ENCODE measurements at regions of chr17 and their contacts with region 1.

Region 1: DNA sequence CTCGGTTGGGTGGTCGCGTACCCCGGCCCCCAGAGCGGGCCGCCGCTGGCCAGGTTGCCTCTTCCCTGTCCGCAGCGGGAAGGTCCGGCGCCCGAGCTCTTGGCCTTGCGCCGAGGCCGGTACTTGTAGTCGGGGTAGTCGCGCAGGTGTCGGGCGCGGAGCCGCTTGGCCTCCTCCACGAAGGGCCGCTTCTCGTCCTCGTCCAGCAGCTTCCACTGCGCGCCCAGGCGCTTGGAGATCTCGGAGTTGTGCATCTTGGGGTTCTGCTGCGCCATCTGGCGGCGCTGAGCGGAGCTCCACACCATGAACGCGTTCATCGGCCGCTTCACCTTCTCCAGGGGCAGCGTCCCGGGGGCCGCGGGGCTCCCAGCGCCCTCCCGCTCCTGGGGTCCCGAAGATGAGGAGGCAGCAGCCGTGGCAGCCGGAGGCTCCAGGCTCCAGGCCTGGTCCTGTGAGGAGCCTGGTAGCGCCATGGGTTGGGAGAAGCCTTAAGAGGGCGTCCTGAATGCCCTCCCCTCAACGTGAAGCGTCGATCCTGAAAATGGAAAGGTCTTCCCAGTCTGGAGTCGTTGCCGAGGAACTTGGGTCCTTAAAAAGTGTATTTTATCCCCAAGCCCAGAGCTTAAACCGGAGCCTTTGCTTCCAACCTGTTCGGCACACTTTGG is 558 bp downstream of the SOX15 start:
- DNase-seq: peak; percentile 53 to 84 (median 65)
- ATAC-seq: peak; percentile 91 to 92
- H3K4me3 Mint-ChIP-seq: no peak overlapping the region
- H3K27ac Mint-ChIP-seq: peak overlapping the region in 5 of 10 donors; percentile 17 to 69 (median 56)
- H3K4me1 Mint-ChIP-seq: peaks cover 6 to 19% (median 17%) of the 10 kb centered on the region in 4 donors
- H3K27me3 Mint-ChIP-seq: no peaks in the 10 kb centered on the region

Region 2: DNA sequence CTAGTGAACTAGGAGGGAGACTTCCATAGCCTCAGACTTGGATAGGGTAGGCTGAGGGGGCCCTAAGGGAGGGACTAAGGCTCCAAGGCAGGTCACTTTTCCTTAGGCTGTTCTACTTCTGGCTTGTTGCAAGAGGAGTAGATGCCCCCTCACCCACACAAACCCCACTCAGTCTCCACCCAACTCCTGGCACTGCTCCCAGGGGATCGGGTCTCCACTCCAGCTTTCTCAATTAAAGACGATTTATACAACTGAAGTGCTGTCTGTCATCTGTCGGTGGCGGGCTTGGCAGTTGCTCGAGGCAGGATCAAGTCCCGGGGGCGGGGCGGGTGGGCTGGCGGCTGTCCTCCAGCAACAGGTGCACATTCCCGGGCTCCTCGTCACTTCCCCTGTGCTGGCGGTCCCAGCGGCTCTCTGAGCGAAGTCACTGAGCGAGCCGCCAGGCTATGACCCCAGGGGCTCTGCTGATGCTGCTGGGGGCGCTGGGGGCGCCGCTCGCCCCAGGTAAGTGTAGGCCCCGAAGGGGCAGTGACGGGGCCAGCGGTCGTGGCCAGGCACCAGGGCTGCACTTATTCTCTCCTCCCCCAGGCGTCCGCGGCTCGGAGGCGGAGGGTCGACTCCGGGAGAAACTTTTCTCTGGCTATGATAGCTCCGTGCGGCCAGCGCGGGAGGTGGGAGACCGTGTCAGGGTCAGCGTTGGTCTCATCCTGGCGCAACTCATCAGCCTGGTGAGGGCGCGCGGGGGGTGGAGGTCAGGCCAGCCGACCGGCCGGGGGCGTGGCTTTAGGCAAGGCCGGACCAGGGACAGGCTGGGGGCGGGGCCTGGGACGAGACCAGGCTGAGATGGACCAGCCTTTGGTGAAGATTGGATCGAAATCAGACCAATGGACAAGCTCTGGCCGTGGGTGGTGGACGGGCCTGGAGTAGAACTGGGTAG is 144.4 kb before region 1 on chr17 and contains the start of gene CHRNB1:
- POLR2A ChIA-PET with region 1: no interaction called
- DNase-seq: peak in 2 of 10 donors; percentile 23 to 24
- ATAC-seq: peak; percentile 32 to 38
- H3K4me3 Mint-ChIP-seq: peak within 1 kb of the TSS; percentile 75 to 94 (median 86)
- H3K27ac Mint-ChIP-seq: peak within 1 kb of the TSS in 8 of 10 donors; percentile 7 to 91 (median 62)
- H3K4me1 Mint-ChIP-seq: peaks cover 19 to 33% (median 28%) of the 10 kb centered on the region in 4 donors
- H3K27me3 Mint-ChIP-seq: peaks cover 17 to 71% (median 40%) of the 10 kb centered on the region in 5 donors
- polyA plus RNA-seq, gene CHRNB1: 18.1 to 24.5 (median 24.3) TPM

Region 3: DNA sequence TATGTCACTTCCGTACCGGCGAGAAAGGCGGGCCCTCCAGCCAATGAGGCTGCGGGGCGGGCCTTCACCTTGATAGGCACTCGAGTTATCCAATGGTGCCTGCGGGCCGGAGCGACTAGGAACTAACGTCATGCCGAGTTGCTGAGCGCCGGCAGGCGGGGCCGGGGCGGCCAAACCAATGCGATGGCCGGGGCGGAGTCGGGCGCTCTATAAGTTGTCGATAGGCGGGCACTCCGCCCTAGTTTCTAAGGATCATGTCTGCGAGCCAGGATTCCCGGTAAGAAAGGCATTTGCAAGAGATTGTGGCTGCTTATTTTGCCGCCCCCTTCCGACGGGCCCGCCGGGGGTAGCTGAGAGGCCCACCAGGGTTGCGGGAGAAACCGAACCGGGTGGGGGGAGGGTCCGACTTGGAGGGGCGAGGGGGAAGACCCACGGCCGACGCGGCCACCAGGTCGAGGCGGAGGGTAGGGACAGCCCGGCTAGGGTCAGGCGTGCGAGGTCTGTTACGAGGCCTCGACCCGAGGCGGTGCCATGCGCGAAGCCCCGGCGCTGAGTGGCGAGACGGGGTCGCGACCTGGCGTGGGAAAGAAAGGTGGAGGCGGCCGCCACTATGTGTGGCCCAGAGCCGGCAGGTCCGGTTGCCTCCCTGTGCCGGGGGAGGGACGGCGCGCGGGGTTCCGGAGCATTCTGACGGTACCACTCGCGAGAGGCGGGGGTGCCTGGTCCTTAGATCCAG is 16.6 kb before region 1 on chr17:
- POLR2A ChIA-PET with region 1: interaction called, 129 read pairs
- DNase-seq: peak; percentile 97 to 100 (median 100)
- ATAC-seq: peak; percentile 12 to 85
- H3K4me3 Mint-ChIP-seq: peak overlapping the region; percentile 91 to 100 (median 98)
- H3K27ac Mint-ChIP-seq: peak overlapping the region; percentile 95 to 100 (median 99)
- H3K4me1 Mint-ChIP-seq: peaks cover 19 to 51% (median 44%) of the 10 kb centered on the region in 4 donors
- H3K27me3 Mint-ChIP-seq: no peaks in the 10 kb centered on the region

Region 4: DNA sequence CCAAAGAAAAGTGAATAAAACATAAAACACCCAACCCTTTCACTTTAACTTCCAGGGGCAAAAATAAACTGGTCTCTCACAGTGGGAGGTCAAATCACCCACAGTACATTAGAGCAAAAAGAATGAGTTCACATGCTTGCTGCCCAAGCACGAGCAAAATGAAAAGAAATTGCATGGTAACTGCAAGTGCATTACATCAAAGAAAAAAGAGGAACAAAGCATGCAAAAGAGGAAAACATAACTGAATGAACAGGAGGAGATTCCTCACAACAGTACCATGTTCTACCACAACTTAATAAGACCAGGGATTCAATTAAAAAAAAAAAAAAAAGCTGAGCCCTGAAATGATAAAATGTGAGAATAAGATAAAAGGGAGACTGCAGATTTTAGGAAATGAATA is 140.5 kb after region 1 on chr17:
- POLR2A ChIA-PET with region 1: no interaction called
- DNase-seq: no peak
- ATAC-seq: no peak
- H3K4me3 Mint-ChIP-seq: no peak overlapping the region
- H3K27ac Mint-ChIP-seq: no peak overlapping the region
- H3K4me1 Mint-ChIP-seq: peaks cover 0 to 6% (median 0%) of the 10 kb centered on the region in 4 donors
- H3K27me3 Mint-ChIP-seq: peaks cover 7 to 24% (median 19%) of the 10 kb centered on the region in 5 donors

Measured in naive thymus-derived CD8-positive, alpha-beta T cell (primary cell).